OCI-LY7 (cell line): ENCODE measurements at regions of chr15 and their contacts with region 1.

Region 1: GRCh38 chr15:76905013-76905839 is at the start of gene SCAPER:
- DNase-seq: peak; percentile 93
- H3K4me3 ChIP-seq: peak within 1 kb of the TSS; percentile 85
- H3K27ac ChIP-seq: peak within 1 kb of the TSS; percentile 21
- H3K4me1 ChIP-seq: peaks cover 21% of the 10 kb centered on the region
- CTCF ChIP-seq: 0 out of 2 replicates have a peak, but pooled peaks have one; percentile 9
- total RNA-seq, gene SCAPER: 10.4 and 11.8 TPM in 2 replicates

Region 2: DNA sequence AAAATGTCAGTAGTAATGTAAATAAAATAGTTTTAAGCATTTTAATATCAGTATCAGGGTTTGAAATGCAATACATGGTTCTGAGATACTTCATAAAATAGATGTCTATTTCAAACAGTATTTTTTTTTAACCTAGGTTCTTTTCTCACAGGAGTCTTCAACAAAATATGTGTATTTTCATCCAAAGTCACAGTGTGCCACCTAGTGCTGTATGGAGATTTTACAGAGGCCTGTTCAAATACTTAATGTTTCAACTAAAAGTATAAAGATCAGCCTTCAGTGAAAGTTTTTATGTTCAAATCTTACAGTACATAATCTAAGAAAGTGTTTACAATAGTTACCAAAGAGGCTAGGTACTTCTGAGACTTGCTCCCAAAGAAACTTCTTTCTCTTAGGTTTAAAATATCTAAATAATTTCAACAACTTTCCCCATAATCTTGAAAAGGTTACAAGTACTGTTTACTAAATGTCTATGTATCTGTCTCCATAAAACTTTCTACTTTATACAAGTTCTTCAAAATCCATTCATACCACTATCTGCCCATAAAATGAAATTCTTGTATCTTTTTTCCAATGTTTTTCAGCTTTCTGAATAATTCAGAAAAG is 38.4 kb before region 1 on chr15:
- CTCF ChIA-PET with region 1: no interaction called
- POLR2A ChIA-PET with region 1: no interaction called
- intact Hi-C with region 1: no loop called
- DNase-seq: peak; percentile 25
- H3K4me3 ChIP-seq: no peak overlapping the region
- H3K27ac ChIP-seq: no peak overlapping the region
- H3K4me1 ChIP-seq: no peaks in the 10 kb centered on the region
- CTCF ChIP-seq: peak; percentile 79

Region 3: DNA sequence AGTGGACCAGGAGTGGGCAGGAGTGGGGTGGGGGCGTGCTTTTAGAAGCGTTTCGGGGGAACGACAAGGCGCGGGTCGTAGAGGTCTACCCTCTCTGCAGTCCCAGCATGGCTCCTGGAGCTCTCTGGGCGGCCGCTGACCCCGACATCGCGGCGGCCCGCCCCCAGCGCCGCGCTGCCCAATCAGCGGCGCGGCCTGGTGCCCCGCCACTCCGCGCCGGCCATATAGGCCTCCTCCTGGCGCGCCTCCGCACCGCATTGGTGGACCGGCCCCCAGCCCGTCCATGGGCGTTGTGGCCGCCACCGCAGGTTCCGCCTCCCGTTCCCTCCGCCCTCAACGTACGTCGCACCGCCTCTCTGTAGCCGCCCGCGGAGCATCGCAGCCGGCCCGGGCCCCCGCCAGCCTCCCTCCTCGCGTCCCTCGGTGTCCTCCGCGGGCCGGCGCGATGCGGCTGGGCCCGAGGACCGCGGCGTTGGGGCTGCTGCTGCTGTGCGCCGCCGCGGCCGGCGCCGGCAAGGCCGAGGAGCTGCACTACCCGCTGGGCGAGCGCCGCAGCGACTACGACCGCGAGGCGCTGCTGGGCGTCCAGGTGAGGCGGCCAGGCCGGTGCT is 26.3 kb after region 1 on chr15 and contains the start of gene RCN2:
- CTCF ChIA-PET with region 1: no interaction called
- POLR2A ChIA-PET with region 1: interaction called, 4 read pairs
- intact Hi-C with region 1: loop called (anchors 2 kb)
- DNase-seq: peak; percentile 95
- H3K4me3 ChIP-seq: peak within 1 kb of the TSS; percentile 90
- H3K27ac ChIP-seq: peak within 1 kb of the TSS; percentile 24
- H3K4me1 ChIP-seq: peaks cover 39% of the 10 kb centered on the region
- CTCF ChIP-seq: no peak
- total RNA-seq, gene RCN2: 32.8 and 33.4 TPM in 2 replicates

Region 4: DNA sequence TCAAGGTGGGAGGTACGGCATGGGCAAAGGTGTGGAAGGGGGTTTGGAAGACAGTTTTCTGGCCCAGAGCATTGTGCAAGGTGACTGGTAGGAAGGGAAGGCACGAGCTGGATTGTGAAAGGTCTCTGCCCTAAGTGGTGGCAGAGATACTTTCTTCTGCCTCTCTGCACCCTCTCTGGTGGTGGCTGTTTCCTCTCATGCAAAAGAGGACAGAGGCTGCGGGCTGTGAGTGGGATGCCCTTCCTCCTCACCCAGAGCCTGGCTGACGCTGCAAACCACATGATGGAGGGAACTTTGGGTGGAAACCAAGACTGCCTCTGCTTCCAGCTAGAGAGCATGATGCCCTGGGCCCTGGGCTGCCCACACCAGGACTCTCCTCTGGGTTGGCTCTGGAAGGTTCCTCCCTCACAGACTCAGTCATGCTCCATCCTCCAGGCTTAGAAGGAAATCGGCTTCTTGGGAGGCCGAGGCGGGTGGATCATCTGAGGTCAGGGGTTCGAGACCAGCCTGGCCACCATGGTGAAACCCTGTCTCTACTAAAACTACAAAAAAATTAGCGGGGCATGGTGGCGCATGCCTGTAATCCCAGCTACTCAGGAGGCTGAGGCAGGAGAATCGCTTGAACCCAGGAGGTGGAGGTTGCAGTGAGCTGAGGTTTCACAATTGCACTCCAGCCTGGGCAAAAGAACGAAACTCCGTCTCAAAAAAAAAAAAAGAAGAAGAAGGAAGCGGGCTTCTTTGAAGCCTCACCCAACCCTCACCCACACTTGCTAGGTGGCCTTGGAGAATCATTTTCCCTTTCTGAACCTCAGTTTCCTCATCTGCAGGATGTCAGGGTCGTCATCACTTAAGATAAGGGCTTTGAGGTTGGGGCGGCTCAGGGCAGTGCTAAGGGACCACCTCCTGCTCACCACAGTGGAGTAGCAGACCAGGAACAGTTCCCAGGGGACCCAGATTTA is 98.0 kb after region 1 on chr15:
- CTCF ChIA-PET with region 1: no interaction called
- POLR2A ChIA-PET with region 1: no interaction called
- intact Hi-C with region 1: loop called (anchors 10 kb)
- DNase-seq: peak; percentile 84
- H3K4me3 ChIP-seq: peak overlapping the region; percentile 15
- H3K27ac ChIP-seq: peak overlapping the region; percentile 58
- H3K4me1 ChIP-seq: peaks cover 29% of the 10 kb centered on the region
- CTCF ChIP-seq: no peak

Region 5: DNA sequence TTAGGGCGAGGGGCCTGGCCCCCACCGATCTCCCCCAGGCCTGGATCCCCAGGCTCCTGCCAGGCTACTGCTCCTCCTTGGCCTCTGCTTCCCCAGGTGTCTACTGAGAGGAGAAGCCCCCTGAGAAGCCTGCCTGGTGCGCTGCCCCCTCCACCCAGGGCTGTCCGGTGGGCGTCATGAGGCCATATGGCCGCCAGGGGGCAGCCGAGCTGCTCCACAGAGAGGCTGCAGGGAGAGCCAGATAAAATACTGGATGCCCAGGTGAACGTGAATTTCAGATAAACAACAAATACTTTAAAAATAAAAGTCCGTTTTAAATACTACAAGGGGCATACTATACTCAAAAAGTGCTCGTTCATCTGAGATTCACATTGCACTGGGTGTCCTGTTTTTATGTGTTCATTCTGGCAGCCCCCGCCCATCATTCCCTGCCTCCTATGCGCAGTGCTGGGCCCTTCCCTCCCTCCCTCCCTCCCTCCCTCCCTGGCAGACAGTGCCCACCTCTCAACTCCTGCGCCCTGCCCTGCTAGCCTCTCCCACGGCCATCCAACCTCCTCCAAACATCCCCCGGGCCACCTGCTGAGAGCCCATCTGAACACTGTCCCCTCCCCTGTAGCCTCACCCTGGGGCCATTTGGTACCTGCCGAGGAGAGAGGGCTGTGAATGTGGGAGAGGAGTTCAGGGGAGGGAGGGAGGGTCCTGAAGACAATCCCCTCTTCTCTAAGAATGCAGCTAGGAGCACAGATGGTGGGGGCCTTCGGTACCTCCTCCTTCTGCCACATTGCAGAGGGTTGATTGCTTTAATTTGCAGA is 119.3 kb after region 1 on chr15:
- CTCF ChIA-PET with region 1: no interaction called
- POLR2A ChIA-PET with region 1: no interaction called
- intact Hi-C with region 1: loop called (anchors 2 kb)
- DNase-seq: peak; percentile 71
- H3K4me3 ChIP-seq: no peak overlapping the region
- H3K27ac ChIP-seq: no peak overlapping the region
- H3K4me1 ChIP-seq: peaks cover 14% of the 10 kb centered on the region
- CTCF ChIP-seq: peak; percentile 96